ENCODE measurements at regions of chr12 and their contacts with region 1.

Region 1: GRCh38 chr12:817941-818600 is 65.7 kb downstream of the WNK1 start:
- DNase-seq: no peak
- H3K4me3 ChIP-seq: no peak overlapping the region
- CTCF ChIP-seq: no peak

Region 2: GRCh38 chr12:761256-761655 is 56.8 kb before region 1 on chr12:
- CTCF ChIA-PET with region 1: interaction called, 21 read pairs
- POLR2A ChIA-PET with region 1: no interaction called
- DNase-seq: no peak
- H3K4me3 ChIP-seq: no peak overlapping the region
- CTCF ChIP-seq: no peak

Region 3: DNA sequence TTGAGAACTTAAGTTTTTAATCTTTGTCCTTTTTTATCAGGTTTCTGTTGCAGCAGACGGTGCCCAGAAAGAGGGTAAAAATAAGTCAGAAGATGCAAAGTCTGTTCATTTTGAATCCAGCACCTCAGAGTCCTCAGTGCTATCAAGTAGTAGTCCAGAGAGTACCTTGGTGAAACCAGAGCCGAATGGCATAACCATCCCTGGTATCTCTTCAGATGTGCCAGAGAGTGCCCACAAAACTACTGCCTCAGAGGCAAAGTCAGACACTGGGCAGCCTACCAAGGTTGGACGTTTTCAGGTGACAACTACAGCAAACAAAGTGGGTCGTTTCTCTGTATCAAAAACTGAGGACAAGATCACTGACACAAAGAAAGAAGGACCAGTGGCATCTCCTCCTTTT is 78.0 kb after region 1 on chr12:
- CTCF ChIA-PET with region 1: interaction called, 21 read pairs
- POLR2A ChIA-PET with region 1: no interaction called
- DNase-seq: no peak
- H3K4me3 ChIP-seq: no peak overlapping the region
- CTCF ChIP-seq: no peak